ENCODE measurements at regions of chr3 and their contacts with region 1.

Region 1: GRCh38 chr3:23945903-23946751 is 1.0 kb downstream of the NR1D2 start:
- DNase-seq: peak; percentile 91
- H3K4me3 Mint-ChIP-seq: peak overlapping the region; percentile 80
- H3K27ac Mint-ChIP-seq: peak overlapping the region; percentile 85
- H3K4me1 Mint-ChIP-seq: peaks cover 23% of the 10 kb centered on the region
- H3K27me3 Mint-ChIP-seq: peaks cover 23% of the 10 kb centered on the region

Region 2: DNA sequence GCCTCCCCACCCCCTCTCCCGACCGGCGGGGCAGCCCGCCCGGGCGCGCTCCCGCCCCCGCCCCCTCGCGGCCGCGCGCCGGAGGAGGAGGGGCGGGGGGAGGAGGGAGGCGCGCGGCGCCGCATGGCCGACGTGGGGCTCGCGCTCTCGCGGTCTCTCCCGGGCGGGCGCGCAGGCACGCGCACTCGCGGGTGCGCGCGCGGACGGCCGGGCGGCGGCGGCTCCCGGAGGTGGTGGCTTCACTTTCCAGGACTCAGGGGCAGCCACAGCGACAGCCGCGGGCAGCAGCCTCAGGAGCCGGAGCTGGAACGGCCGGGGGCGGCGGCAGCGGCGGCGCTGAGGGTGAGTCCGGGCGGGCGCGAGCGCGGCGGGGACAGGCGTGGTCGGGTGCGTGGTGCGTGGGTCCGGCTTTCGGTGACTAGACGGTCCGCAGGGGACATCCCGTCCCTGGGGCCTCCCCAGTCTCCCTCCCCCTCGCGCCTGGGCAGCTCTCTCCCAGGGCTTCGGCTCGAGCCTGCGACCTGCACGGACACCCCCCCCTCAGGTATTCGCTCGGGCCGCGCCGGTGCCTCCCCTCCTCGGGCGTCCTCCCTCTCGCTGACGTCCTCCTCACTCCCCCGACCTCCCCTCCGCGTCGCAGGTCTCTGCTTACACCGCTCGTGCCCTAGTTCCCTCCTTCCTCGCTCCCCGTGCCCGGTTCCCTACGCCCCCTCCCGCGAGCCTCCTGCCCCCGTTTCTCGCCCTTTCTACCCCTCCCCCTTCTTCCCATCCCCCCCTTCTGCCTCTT is 743.0 kb before region 1 on chr3 and contains the start of gene UBE2E2:
- intact Hi-C with region 1: loop called (anchors 5 kb)
- DNase-seq: peak; percentile 45
- H3K4me3 Mint-ChIP-seq: peak within 1 kb of the TSS; percentile 93
- H3K27ac Mint-ChIP-seq: peak within 1 kb of the TSS; percentile 76
- H3K4me1 Mint-ChIP-seq: peaks cover 21% of the 10 kb centered on the region
- H3K27me3 Mint-ChIP-seq: peaks cover 42% of the 10 kb centered on the region
- total RNA-seq, gene UBE2E2: 6.3 and 7.5 TPM in 2 replicates

Region 3: DNA sequence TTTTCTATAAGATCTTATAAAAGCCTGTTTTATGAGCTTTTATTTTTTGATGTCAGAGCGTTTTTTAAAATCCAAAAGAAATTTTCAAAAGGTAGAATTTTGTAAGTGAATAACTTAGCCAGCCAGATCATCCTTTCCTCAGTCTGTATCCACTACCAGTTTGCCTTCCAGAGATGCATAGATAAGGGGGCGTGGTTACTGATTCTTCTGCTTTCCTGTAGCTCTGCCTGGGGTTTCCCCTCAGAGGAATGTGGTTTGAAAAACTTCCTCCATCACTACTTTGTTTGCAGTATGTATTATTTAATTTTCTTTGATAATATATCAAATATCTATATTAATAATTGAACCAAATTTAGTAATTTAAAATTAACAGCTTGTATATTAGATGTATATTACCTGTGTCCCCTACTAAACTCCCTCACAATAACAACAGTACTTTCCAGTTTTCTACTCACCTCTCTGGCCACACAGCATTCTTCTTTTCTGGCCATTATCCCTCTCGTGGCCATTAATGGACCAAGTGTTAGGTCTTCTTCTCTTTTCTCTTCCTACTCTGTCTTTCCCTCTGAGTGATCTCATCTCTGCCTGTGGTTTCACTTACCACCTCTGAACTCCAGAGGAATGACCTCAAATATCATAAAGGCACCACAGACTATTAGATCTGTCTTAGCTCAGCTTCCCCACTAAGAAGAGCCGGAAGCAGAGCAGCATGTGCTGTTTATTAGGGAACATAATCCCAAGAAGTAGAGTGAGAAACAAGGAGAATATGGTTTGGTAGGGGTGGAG is 503.3 kb before region 1 on chr3:
- intact Hi-C with region 1: loop called (anchors 10 kb)
- DNase-seq: no peak
- H3K4me3 Mint-ChIP-seq: no peak overlapping the region
- H3K27ac Mint-ChIP-seq: no peak overlapping the region
- H3K4me1 Mint-ChIP-seq: peaks cover 32% of the 10 kb centered on the region
- H3K27me3 Mint-ChIP-seq: peaks cover 8% of the 10 kb centered on the region

Region 4: GRCh38 chr3:23805633-23806533 is 140.2 kb before region 1 on chr3 and contains the start of gene UBE2E1:
- intact Hi-C with region 1: loop called (anchors 1 kb)
- DNase-seq: peak; percentile 55
- H3K4me3 Mint-ChIP-seq: peak within 1 kb of the TSS; percentile 91
- H3K27ac Mint-ChIP-seq: peak within 1 kb of the TSS; percentile 94
- H3K4me1 Mint-ChIP-seq: peaks cover 40% of the 10 kb centered on the region
- H3K27me3 Mint-ChIP-seq: peaks cover 25% of the 10 kb centered on the region
- total RNA-seq, gene UBE2E1: 63.9 and 70.2 TPM in 2 replicates

Region 5: GRCh38 chr3:23845326-23846221 is 100.6 kb before region 1 on chr3:
- intact Hi-C with region 1: no loop called
- DNase-seq: no peak
- H3K4me3 Mint-ChIP-seq: no peak overlapping the region
- H3K27ac Mint-ChIP-seq: no peak overlapping the region
- H3K4me1 Mint-ChIP-seq: peaks cover 9% of the 10 kb centered on the region
- H3K27me3 Mint-ChIP-seq: no peaks in the 10 kb centered on the region

Region 6: DNA sequence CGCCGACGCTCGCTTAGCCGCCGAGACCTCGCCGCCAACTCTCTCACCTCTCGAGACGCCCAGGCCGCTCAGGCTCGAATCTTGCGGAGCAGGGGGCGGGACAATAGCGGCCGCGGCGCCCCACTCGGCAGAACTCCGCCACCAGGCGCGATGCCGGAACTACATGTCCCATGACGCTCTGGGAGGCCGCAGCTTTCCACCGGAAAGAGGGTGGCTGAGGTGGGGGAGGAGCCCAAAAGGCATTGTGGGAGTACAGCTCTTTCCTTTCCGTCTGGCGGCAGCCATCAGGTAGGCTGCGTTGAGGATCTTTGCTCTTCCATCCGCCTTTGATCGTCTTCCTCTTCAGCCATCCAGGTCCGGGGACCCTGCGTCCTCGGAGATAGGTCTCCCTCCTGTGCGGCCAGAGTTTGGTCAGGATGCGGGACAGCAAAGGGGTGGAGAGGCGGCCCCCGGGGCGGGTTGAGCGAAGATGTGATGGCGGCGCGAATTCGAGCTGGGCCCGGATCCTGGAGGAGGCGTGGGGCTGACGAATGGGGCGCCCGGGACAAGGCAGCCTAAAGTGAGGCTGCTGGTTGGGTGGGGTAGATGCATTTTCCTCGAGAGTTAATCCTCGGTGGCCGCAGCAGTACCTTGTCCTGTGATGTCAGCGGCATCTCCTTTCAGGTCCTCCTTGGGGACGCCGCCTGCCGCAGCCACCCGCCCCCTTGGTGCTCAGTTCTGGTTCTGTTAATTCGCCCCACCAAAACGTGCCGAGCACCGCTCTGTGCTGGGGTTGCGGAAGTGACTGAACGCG is 29.0 kb before region 1 on chr3 and contains the starts of genes NKIRAS1 and RPL15:
- intact Hi-C with region 1: loop called (anchors 1 kb)
- DNase-seq: peak; percentile 95
- H3K4me3 Mint-ChIP-seq: peak within 1 kb of the TSS; percentile 96
- H3K27ac Mint-ChIP-seq: peak within 1 kb of the TSS; percentile 92
- H3K4me1 Mint-ChIP-seq: peaks cover 45% of the 10 kb centered on the region
- H3K27me3 Mint-ChIP-seq: peaks cover 16% of the 10 kb centered on the region
- total RNA-seq, gene NKIRAS1: 2.3 TPM in 2 replicates
- total RNA-seq, gene RPL15: 1,859 and 1,865 TPM in 2 replicates